ENCODE measurements at regions of chr14 and their contacts with region 1.

Region 1: DNA sequence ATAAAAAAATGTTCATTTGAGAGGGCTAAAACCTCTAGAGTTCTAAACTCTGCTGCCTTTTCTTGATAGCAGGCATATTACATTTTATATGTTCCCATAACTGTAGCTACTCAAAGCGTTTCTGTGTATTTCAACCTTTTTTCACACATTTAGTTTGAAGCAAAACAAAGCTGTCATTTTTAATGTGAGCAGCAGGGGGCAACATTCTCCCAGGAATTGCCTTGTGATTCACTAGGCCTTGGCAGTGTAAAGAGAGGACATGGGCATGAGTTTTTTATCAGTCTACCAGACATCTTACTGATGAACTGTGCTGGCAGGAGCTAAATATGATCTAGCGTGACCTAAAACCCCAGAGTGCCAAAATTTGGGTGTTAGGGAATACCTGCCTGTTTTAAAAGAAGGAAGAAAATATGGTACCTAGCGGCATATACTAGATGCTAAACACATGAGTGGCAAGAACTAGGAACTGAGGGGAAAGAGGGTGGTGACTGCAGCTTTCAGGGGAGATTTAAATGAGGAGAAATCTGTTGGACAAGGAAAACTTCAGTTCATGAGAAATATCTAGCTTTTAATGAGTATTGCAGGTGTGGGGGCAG is 65.3 kb downstream of the IFT43 start:
- DNase-seq: peak; percentile 51
- H3K4me3 ChIP-seq: no peak overlapping the region
- H3K27ac ChIP-seq: no peak overlapping the region
- H3K4me1 ChIP-seq: no peaks in the 10 kb centered on the region
- H3K27me3 ChIP-seq: no peaks in the 10 kb centered on the region
- CTCF ChIP-seq: peak; percentile 78

Region 2: GRCh38 chr14:76352639-76353281 is 301.9 kb after region 1 on chr14:
- intact Hi-C with region 1: loop called (anchors 2 kb)
- DNase-seq: peak; percentile 29
- H3K4me3 ChIP-seq: no peak overlapping the region
- H3K27ac ChIP-seq: no peak overlapping the region
- H3K4me1 ChIP-seq: no peaks in the 10 kb centered on the region
- H3K27me3 ChIP-seq: no peaks in the 10 kb centered on the region
- CTCF ChIP-seq: peak; percentile 62

Region 3: DNA sequence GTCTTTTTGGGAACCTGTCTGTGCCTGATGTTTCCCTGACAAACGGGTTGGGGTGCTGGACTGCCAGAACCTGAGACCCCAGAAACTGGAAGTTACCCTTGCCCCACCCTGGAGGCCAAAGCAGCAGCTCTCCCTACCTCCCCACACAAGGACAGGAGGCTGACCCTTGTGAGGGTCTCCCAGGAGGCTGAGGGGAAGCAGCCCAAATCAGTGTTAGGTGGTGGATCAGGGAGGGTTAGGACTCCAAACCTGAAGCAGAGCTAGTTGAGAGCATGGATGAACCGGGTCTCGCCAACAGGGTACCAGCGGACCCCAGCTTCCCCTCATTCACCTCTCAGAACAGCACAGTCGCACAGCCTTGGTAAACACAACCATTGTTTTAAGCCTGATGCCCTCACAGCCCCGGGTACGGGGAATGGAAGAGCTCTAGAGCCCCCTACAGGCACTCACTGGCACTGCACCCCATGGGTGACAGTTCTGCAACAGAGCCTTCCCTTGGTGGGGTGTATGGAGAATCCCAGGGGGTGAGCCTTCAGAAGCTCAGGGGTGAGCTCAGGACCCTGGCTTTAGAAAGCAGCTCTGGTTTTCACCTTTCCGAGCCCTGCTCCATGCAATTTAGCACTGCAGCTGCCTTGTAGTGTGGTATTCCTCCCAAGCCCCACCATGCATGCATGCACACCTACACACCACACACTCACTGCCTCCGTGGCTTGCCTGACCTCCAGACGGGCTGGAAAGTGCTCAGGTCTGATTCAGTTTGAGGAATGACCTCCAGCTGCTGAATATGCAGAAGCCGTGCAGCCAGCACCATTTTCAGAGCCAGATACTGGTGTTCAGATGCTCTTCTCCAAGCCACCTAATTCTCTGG is 336.3 kb after region 1 on chr14:
- intact Hi-C with region 1: loop called (anchors 10 kb)
- DNase-seq: peak; percentile 61
- H3K4me3 ChIP-seq: no peak overlapping the region
- H3K27ac ChIP-seq: no peak overlapping the region
- H3K4me1 ChIP-seq: no peaks in the 10 kb centered on the region
- H3K27me3 ChIP-seq: peaks cover 2% of the 10 kb centered on the region
- CTCF ChIP-seq: peak; percentile 96

Region 4: DNA sequence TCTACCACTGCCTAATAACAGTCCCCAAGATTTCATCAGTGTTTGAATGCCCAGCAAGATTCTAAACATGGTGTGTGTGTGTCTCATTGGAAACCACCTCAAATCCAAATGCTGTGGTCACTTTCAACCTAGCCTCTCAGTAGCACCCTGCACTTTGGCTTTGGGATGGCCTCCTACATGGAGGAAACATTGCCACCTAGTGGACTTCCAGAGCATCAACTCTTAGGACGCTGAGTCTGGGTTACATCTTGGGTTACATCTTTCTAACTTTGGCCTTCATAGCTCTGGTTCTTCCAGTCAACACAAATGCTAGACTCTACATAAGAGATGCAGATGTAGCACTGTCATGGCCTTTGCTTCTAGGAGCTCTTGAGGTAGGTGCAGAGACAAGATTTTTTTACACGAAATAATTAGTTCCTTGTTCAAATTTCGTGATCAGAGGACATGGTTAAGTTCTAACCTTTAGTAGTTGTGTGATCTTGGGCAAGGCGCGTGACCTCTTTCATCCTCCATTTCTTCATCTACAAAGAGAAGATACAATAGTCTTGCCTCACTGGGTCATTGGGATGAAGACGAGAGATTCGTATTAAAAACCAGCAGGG is 596.9 kb after region 1 on chr14:
- intact Hi-C with region 1: loop called (anchors 5 kb)
- DNase-seq: no peak
- H3K4me3 ChIP-seq: no peak overlapping the region
- H3K27ac ChIP-seq: no peak overlapping the region
- H3K4me1 ChIP-seq: no peaks in the 10 kb centered on the region
- H3K27me3 ChIP-seq: no peaks in the 10 kb centered on the region
- CTCF ChIP-seq: peak; percentile 69

Measured in colonic mucosa (tissue), 4 donors.